ENCODE measurements at regions of chr5 and their contacts with region 1.

Region 1: GRCh38 chr5:150801117-150801927 is 22.8 kb downstream of the SMIM3 start:
- DNase-seq: peak; percentile 59 to 71
- ATAC-seq: peak; percentile 89 to 97
- H3K4me3 ChIP-seq: peak overlapping the region; percentile 29
- H3K27ac ChIP-seq: peak overlapping the region; percentile 12 to 50; a peak in 2 of 6 replicates
- H3K4me1 ChIP-seq: no peaks in the 10 kb centered on the region
- CTCF ChIP-seq: peak; percentile 67
- EP300 ChIP-seq: no peak
- POLR2A ChIP-seq: no peak
- RAD21 ChIP-seq: peak; percentile 58 to 63; a peak in 4 of 5 replicates

Region 2: GRCh38 chr5:150710165-150710564 is 91.2 kb before region 1 on chr5:
- CTCF ChIA-PET with region 1: no interaction called
- POLR2A ChIA-PET with region 1: no interaction called
- DNase-seq: peak; percentile 13 to 14
- ATAC-seq: peak; percentile 62 to 65; a peak in 4 of 6 replicates
- H3K4me3 ChIP-seq: no peak overlapping the region
- H3K27ac ChIP-seq: no peak overlapping the region
- H3K4me1 ChIP-seq: no peaks in the 10 kb centered on the region
- CTCF ChIP-seq: peak; percentile 45
- EP300 ChIP-seq: no peak
- POLR2A ChIP-seq: no peak
- RAD21 ChIP-seq: peak; percentile 47 to 57; a peak in 4 of 5 replicates

Region 3: GRCh38 chr5:150789943-150790611 is 11.2 kb before region 1 on chr5:
- CTCF ChIA-PET with region 1: interaction called, 33 read pairs
- POLR2A ChIA-PET with region 1: no interaction called
- DNase-seq: peak in 1 of 2 experiments; percentile 16
- ATAC-seq: peak; percentile 71 to 75; a peak in 5 of 6 replicates
- H3K4me3 ChIP-seq: no peak overlapping the region
- H3K27ac ChIP-seq: peak overlapping the region in 1 of 2 experiments; percentile 53; a peak in 3 of 6 replicates
- H3K4me1 ChIP-seq: peaks cover 7% of the 10 kb centered on the region; the same call in 1 of the 3 replicates
- CTCF ChIP-seq: no peak
- EP300 ChIP-seq: no peak
- POLR2A ChIP-seq: no peak
- RAD21 ChIP-seq: no peak

Region 4: DNA sequence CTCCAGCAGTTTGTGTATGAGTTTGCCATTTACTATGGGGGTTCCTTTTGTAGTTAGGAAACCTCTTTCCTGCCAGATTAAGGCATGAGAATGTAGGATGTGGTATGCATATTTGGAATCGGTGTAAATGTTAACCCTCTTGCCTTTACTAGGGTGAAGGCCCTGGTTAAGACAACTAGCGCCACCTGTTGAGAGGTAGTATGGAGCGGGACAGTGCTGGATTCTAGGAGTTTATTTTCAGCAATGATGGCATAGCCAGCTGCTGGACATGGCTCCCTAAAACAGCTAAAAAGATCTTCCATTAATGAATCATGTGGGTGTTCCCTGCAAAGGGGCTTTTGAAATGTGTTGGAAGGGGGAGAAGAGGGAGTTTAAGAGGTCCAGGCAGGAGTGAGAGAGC is 188.4 kb after region 1 on chr5:
- CTCF ChIA-PET with region 1: no interaction called
- POLR2A ChIA-PET with region 1: no interaction called
- DNase-seq: no peak
- ATAC-seq: peak in 1 of 2 experiments; percentile 67; a peak in 2 of 6 replicates
- H3K4me3 ChIP-seq: no peak overlapping the region
- H3K27ac ChIP-seq: no peak overlapping the region
- H3K4me1 ChIP-seq: no peaks in the 10 kb centered on the region
- CTCF ChIP-seq: peak; percentile 7; the same call in 1 of the 3 replicates
- EP300 ChIP-seq: no peak
- POLR2A ChIP-seq: no peak
- RAD21 ChIP-seq: peak in 1 of 2 experiments; percentile 51; a peak in 2 of 5 replicates

Measured in A549 (cell line).